ENCODE measurements at regions of chr5 and their contacts with region 1.

Region 1: GRCh38 chr5:160188142-160189015 is 40.9 kb upstream of the FABP6 start:
- H3K4me3 Mint-ChIP-seq: peak overlapping the region; percentile 56
- H3K27ac Mint-ChIP-seq: peak overlapping the region; percentile 56
- H3K4me1 Mint-ChIP-seq: peaks cover 33% of the 10 kb centered on the region
- H3K27me3 Mint-ChIP-seq: peaks cover 20% of the 10 kb centered on the region

Region 2: DNA sequence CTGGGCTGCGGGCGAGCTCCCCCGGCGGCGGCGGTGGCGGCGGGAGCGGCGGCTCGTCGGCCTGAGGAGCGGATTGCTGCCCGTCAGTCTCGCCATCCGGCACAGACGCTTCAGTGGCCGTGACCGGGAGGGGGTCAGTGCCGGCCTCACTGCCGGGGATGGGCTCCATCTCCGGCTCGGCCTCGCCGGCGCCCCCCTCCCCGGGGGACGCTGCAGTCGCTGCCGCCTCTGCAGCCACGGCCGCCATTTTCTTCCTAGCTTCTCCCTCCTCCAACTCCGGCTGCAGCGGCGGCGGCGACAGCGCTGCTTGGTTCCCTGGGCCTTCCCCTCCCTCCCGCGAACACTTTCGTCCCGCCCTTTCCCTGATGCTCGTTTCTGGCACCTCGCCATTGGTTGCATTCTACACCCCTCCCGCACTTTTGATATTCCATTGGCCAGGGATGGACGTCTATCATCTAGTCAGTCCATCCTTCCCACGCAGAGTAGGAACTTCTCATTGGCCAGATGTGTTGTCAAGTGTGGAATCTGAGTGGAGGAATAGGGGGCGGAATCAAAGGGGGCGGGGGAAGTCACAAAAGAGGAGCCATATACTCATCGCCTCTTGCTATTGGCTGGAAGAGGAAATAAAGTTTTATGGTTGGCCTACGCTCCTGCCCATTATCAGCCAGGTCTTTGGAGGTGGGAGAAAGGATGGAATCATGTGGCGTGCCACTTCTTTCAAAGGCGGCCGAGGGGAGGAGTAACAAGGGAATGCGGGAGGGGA is 69.1 kb before region 1 on chr5 and contains the start of gene PWWP2A:
- intact Hi-C with region 1: loop called (anchors 10 kb)
- H3K4me3 Mint-ChIP-seq: peak within 1 kb of the TSS; percentile 87
- H3K27ac Mint-ChIP-seq: peak within 1 kb of the TSS; percentile 91
- H3K4me1 Mint-ChIP-seq: peaks cover 8% of the 10 kb centered on the region
- H3K27me3 Mint-ChIP-seq: peaks cover 12% of the 10 kb centered on the region

Region 3: GRCh38 chr5:160213537-160213936 is 25.2 kb after region 1 on chr5:
- intact Hi-C with region 1: no loop called
- H3K4me3 Mint-ChIP-seq: no peak overlapping the region
- H3K27ac Mint-ChIP-seq: no peak overlapping the region
- H3K4me1 Mint-ChIP-seq: no peaks in the 10 kb centered on the region
- H3K27me3 Mint-ChIP-seq: peaks cover 9% of the 10 kb centered on the region

Measured in dendritic cell treated with granulocyte-macrophage colony-stimulating factor and Interleukin-4, amounts not matched to agents 40 ng/mL and 50 ng/mL, for 4 days (primary cell).